ENCODE measurements at regions of chr6 and their contacts with region 1.

Region 1: GRCh38 chr6:3442431-3443220 is 14.2 kb downstream of the SLC22A23 start:
- DNase-seq: peak; percentile 49 to 80 (median 66)
- ATAC-seq: peak; percentile 84
- H3K4me3 ChIP-seq: no peak overlapping the region
- H3K27ac ChIP-seq: peak overlapping the region; percentile 52
- H3K4me1 ChIP-seq: peaks cover 31 to 34% of the 10 kb centered on the region in 2 experiments
- H3K27me3 ChIP-seq: no peaks in the 10 kb centered on the region
- CTCF ChIP-seq: peak in 1 of 3 experiments; percentile 14; a peak in 2 of 6 replicates
- EP300 ChIP-seq: peak; percentile 58
- POLR2A ChIP-seq: no peak
- RAD21 ChIP-seq: peak in 1 of 2 experiments; percentile 25; a peak in 2 of 4 replicates

Region 2: DNA sequence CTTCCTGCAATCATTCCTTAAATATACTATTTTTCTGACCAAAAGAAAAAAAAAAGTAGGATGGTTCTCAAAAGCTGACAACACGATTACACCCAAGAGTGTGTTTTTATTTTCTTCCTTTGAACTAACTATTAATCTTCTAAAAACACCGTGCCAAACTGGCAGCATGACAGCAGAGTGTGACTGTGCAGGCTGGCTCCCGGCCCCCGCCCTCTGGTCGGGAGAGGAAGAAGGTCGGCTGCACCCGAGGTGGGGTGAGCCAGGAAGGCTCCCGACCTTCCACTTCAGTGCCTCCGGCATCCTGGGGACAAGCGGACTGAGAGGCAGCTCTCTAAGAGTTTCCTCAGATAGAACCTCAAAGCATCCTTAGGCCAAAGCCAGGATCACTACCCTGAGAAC is 14.9 kb before region 1 on chr6:
- CTCF ChIA-PET with region 1: no interaction called
- POLR2A ChIA-PET with region 1: interaction called, 13 read pairs
- in situ Hi-C with region 1: no loop called
- intact Hi-C with region 1: no loop called
- DNase-seq: no peak
- ATAC-seq: peak; percentile 53
- H3K4me3 ChIP-seq: no peak overlapping the region
- H3K27ac ChIP-seq: no peak overlapping the region
- H3K4me1 ChIP-seq: peaks cover 2 to 7% of the 10 kb centered on the region in 2 experiments; a peak in 3 of 5 replicates
- H3K27me3 ChIP-seq: no peaks in the 10 kb centered on the region
- CTCF ChIP-seq: no peak
- EP300 ChIP-seq: no peak
- POLR2A ChIP-seq: no peak
- RAD21 ChIP-seq: no peak

Region 3: GRCh38 chr6:3456755-3457466 is 14.3 kb after region 1 on chr6 and contains the start of gene SLC22A23:
- CTCF ChIA-PET with region 1: no interaction called
- POLR2A ChIA-PET with region 1: interaction called, 19 read pairs
- in situ Hi-C with region 1: no loop called
- intact Hi-C with region 1: no loop called
- DNase-seq: peak; percentile 86 to 99 (median 98)
- ATAC-seq: peak; percentile 80
- H3K4me3 ChIP-seq: peak within 1 kb of the TSS; percentile 50
- H3K27ac ChIP-seq: no peak within 1 kb of the TSS; the same call in 1 of the 3 replicates
- H3K4me1 ChIP-seq: peaks cover 24 to 45% of the 10 kb centered on the region in 2 experiments
- H3K27me3 ChIP-seq: 0 out of 5 replicates have a peak, but pooled peaks cover 0 to 7% of the 10 kb centered on the region in 2 experiments
- CTCF ChIP-seq: peak; percentile 57 to 83 (median 64); a peak in 5 of 6 replicates
- EP300 ChIP-seq: no peak
- POLR2A ChIP-seq: no peak
- RAD21 ChIP-seq: peak in 1 of 2 experiments; percentile 55; a peak in 3 of 4 replicates
- polyA plus RNA-seq, gene SLC22A23: 0.30 to 0.32 TPM

Measured in K562 (cell line).